ENCODE measurements at regions of chr19 and their contacts with region 1.

Region 1: DNA sequence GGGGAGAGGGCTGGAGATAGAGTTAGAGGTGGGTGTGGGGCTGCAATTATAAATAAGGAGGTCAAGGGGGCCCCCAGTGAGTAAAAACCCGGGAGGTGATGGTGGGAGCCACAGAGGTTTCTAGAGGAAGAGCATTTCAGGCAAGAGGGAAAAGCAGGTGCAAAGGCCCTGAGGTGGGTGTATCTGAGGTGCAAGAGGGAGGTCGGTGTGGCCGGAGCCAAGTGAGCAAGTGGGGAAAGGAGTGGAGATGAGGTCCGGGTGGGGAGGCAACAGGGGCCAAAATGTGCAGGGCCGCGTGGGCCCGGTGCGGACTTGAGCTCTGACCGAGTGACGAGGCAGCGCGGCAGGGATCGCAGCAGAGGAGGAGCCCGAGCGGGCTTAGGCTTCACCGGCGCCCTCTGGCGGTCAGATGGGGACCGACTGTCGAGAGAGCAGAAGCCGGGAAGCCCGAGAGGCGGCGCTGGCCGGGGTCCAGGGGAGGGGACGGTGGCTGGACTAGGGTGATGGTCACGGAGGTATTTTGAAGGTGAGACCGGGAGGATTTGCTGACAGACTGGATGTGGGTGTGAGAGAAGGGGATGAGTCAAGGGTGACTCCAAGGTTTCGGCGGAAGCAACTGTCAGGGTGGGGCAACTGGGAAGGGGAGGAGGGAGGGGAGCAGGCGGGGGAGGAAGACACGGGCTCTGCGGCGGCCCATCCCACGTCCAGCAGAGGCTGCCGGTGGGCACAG is 17.7 kb upstream of the SPACA4 start:
- DNase-seq: peak; percentile 95
- ATAC-seq: peak; percentile 83 to 91

Region 2: GRCh38 chr19:48255376-48256303 is 333.2 kb before region 1 on chr19 and contains the start of gene CARD8:
- intact Hi-C with region 1: loop called in 1 of 2 experiments (anchors 10 kb)
- DNase-seq: peak; percentile 87
- ATAC-seq: peak; percentile 94 to 95
- total RNA-seq, gene CARD8: 33.5 to 37.4 TPM

Region 3: GRCh38 chr19:48321622-48322591 is 266.9 kb before region 1 on chr19:
- intact Hi-C with region 1: loop called in 1 of 2 experiments (anchors 10 kb)
- DNase-seq: peak; percentile 99
- ATAC-seq: peak; percentile 91 to 92

Region 4: DNA sequence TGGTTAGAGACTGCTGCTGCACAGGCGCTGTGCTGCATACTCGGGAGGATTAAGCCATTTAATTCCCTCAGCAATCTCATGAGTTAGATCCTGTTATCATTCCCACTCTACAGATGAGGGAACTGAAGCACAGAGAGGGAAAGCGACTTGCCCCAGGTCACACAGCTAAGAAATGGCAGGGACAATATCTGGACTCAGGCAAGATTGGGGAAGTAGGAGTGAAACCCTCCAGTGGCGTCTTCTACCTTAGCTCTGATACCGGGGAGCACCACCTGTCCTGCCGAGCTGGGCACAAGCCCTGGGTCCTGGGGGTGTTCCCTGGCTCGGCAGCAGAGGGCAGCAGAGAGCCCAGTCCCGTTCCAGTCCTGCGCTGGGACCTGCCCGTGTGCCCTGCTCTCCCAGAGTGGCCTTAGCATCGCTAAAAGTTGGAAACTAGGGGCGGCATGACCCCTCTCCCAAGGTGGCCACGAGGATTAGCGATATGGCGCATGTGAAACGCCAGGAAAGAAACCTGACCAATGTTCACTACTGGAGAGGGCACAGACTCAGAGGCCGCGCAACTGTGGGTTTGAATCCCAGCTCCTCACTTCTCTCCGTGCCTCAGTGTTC is 99.1 kb before region 1 on chr19:
- intact Hi-C with region 1: loop called (anchors 5 kb)
- DNase-seq: peak; percentile 76
- ATAC-seq: no peak